ENCODE measurements at regions of chr7 and their contacts with region 1.

Region 1: DNA sequence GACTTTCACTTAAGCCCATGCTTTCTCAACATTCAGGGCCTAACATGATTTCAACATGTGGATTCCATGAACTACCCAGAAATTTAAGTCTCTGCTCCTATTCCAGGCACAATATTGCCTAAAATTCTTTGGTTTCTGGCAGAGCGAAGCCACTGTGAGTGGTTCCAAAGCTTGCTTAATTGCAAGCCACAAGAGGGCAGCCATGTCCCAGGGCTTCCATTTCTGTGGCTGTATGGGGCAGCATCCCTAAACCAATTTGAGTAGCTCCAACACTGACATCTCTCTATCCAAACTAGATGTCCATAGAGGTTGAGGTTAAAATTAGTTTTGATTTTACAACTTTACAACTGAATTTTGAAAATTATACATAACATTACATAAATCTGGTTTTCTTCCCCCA is 56.3 kb upstream of the MDFIC start:
- DNase-seq: peak; percentile 29
- ATAC-seq: peak; percentile 81
- H3K4me3 Mint-ChIP-seq: no peak overlapping the region
- H3K27ac Mint-ChIP-seq: no peak overlapping the region
- H3K4me1 Mint-ChIP-seq: peaks cover 10% of the 10 kb centered on the region
- H3K27me3 Mint-ChIP-seq: no peaks in the 10 kb centered on the region
- CTCF ChIP-seq: peak; percentile 92

Region 2: DNA sequence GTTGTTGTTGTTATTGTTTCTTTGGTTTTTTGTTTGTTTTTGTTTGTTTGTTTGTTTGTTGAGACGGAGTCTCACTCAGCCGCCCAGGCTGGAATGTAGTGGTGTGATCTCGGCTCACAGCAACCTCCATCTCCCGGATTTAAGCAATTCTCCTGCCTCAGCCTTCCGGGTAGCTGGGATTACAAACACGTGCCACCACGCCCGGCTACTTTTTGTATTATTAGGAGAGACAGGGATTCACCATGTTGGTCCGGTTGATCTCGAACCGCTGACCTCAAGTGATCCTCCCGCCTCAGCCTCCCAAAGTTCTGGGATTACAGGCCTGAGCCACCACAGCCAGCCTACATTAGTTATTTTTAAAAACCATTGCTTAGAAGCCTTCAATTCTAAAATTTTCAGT is 406.0 kb before region 1 on chr7:
- CTCF ChIA-PET with region 1: no interaction called
- POLR2A ChIA-PET with region 1: no interaction called
- intact Hi-C with region 1: no loop called
- DNase-seq: no peak
- ATAC-seq: no peak
- H3K4me3 Mint-ChIP-seq: no peak overlapping the region
- H3K27ac Mint-ChIP-seq: no peak overlapping the region
- H3K4me1 Mint-ChIP-seq: no peaks in the 10 kb centered on the region
- H3K27me3 Mint-ChIP-seq: no peaks in the 10 kb centered on the region
- CTCF ChIP-seq: no peak

Region 3: GRCh38 chr7:114916261-114916892 is 50.8 kb after region 1 on chr7:
- CTCF ChIA-PET with region 1: interaction called, 16 read pairs
- POLR2A ChIA-PET with region 1: interaction called, 12 read pairs
- intact Hi-C with region 1: loop called (anchors 1 kb)
- DNase-seq: no peak
- ATAC-seq: peak; percentile 92
- H3K4me3 Mint-ChIP-seq: peak overlapping the region; percentile 75
- H3K27ac Mint-ChIP-seq: peak overlapping the region; percentile 91
- H3K4me1 Mint-ChIP-seq: peaks cover 59% of the 10 kb centered on the region
- H3K27me3 Mint-ChIP-seq: no peaks in the 10 kb centered on the region
- CTCF ChIP-seq: no peak

Region 4: GRCh38 chr7:114939484-114940097 is 74.0 kb after region 1 on chr7:
- CTCF ChIA-PET with region 1: interaction called, 40 read pairs
- POLR2A ChIA-PET with region 1: no interaction called
- intact Hi-C with region 1: loop called (anchors 1 kb)
- DNase-seq: no peak
- ATAC-seq: peak; percentile 56
- H3K4me3 Mint-ChIP-seq: no peak overlapping the region
- H3K27ac Mint-ChIP-seq: no peak overlapping the region
- H3K4me1 Mint-ChIP-seq: peaks cover 66% of the 10 kb centered on the region
- H3K27me3 Mint-ChIP-seq: no peaks in the 10 kb centered on the region
- CTCF ChIP-seq: no peak

Region 5: DNA sequence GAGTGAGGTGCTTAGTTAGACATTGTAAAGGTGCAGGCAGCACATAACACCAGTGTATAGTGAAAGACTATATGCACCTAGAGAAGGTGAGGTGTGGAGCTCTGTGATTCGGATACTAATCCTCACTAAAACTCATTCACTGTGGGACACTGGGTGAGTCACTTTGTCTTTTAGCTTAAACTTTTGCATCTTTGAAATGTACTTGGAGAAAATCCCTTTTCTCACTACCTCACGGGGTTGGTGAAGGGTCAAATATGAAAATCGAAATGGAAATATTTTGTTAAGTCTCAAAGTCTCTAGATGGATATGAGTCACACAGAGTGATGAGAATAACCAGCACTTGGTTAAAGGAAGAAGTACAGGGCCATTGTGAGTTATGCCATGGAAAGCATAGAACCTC is 94.4 kb after region 1 on chr7:
- CTCF ChIA-PET with region 1: interaction called, 12 read pairs
- POLR2A ChIA-PET with region 1: no interaction called
- intact Hi-C with region 1: no loop called
- DNase-seq: no peak
- ATAC-seq: peak; percentile 68
- H3K4me3 Mint-ChIP-seq: no peak overlapping the region
- H3K27ac Mint-ChIP-seq: peak overlapping the region; percentile 70
- H3K4me1 Mint-ChIP-seq: peaks cover 63% of the 10 kb centered on the region
- H3K27me3 Mint-ChIP-seq: no peaks in the 10 kb centered on the region
- CTCF ChIP-seq: no peak

Region 6: GRCh38 chr7:115356139-115356746 is 490.7 kb after region 1 on chr7:
- CTCF ChIA-PET with region 1: interaction called, 4 read pairs
- POLR2A ChIA-PET with region 1: no interaction called
- intact Hi-C with region 1: loop called (anchors 1 kb)
- DNase-seq: no peak
- ATAC-seq: no peak
- H3K4me3 Mint-ChIP-seq: no peak overlapping the region
- H3K27ac Mint-ChIP-seq: no peak overlapping the region
- H3K4me1 Mint-ChIP-seq: peaks cover 10% of the 10 kb centered on the region
- H3K27me3 Mint-ChIP-seq: no peaks in the 10 kb centered on the region
- CTCF ChIP-seq: no peak

Region 7: DNA sequence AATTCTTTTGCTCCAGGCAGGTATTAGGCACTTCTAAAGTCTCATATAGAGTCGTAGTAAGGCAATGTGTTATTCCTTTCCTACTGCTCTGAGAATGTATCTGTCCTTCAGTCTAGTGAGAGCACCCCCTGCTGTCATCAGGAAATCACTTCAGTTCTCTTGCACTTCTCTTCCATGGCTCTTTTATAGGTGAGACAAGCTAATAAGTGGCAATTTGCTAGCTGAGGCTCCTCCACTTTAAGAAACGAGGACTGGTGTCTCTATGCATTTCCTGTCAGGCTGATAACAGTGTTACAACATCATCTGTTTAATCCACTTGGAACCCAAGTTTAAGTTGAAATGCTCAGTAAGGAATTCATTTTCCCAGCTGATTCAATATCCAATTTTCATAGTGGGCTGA is 814.4 kb after region 1 on chr7:
- CTCF ChIA-PET with region 1: interaction called, 20 read pairs
- POLR2A ChIA-PET with region 1: no interaction called
- intact Hi-C with region 1: loop called (anchors 1 kb)
- DNase-seq: no peak
- ATAC-seq: no peak
- H3K4me3 Mint-ChIP-seq: no peak overlapping the region
- H3K27ac Mint-ChIP-seq: no peak overlapping the region
- H3K4me1 Mint-ChIP-seq: no peaks in the 10 kb centered on the region
- H3K27me3 Mint-ChIP-seq: no peaks in the 10 kb centered on the region
- CTCF ChIP-seq: no peak

Region 8: DNA sequence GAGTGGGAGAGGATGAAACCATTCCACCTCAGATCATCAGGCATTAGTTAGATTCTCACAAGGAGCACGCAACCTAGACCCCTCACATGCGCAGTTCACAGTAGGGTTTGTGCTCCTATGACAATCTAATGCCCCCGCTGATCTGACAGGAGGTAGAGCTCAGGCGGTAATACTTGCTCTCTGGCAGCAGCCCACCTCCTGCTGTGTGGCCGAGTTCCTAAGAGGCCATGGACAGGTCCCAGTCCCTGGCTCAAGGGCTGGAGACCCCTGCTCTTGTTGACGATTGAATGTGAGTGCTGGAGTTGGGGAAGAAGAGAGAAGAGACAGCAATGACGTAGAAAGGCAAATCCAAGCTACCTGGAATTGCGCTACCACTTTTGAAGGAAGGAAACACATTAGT is 897.8 kb after region 1 on chr7:
- CTCF ChIA-PET with region 1: no interaction called
- POLR2A ChIA-PET with region 1: no interaction called
- intact Hi-C with region 1: no loop called
- DNase-seq: no peak
- ATAC-seq: no peak
- H3K4me3 Mint-ChIP-seq: no peak overlapping the region
- H3K27ac Mint-ChIP-seq: no peak overlapping the region
- H3K4me1 Mint-ChIP-seq: no peaks in the 10 kb centered on the region
- H3K27me3 Mint-ChIP-seq: no peaks in the 10 kb centered on the region
- CTCF ChIP-seq: no peak

Region 9: GRCh38 chr7:116122972-116123595 is 1257.5 kb after region 1 on chr7:
- CTCF ChIA-PET with region 1: no interaction called
- POLR2A ChIA-PET with region 1: no interaction called
- intact Hi-C with region 1: loop called (anchors 1 kb)
- DNase-seq: no peak
- ATAC-seq: no peak
- H3K4me3 Mint-ChIP-seq: no peak overlapping the region
- H3K27ac Mint-ChIP-seq: no peak overlapping the region
- H3K4me1 Mint-ChIP-seq: no peaks in the 10 kb centered on the region
- H3K27me3 Mint-ChIP-seq: peaks cover 2% of the 10 kb centered on the region
- CTCF ChIP-seq: no peak

Measured in activated B cell treated with CpG ODN at 0.5 μM for 24 hours (primary cell).